GM10248 (cell line): ENCODE measurements at regions of chr1 and their contacts with region 1.

Region 1: GRCh38 chr1:204961765-204962419 is 81.1 kb upstream of the CNTN2 start:
- DNase-seq: no peak
- CTCF ChIP-seq: no peak

Region 2: GRCh38 chr1:204763706-204764427 is 198.0 kb before region 1 on chr1:
- CTCF ChIA-PET with region 1: no interaction called
- POLR2A ChIA-PET with region 1: no interaction called
- DNase-seq: peak; percentile 82
- CTCF ChIP-seq: peak; percentile 86

Region 3: GRCh38 chr1:204941421-204942338 is 20.2 kb before region 1 on chr1:
- CTCF ChIA-PET with region 1: interaction called, 12 read pairs
- POLR2A ChIA-PET with region 1: no interaction called
- DNase-seq: peak; percentile 59
- CTCF ChIP-seq: peak; percentile 88

Region 4: DNA sequence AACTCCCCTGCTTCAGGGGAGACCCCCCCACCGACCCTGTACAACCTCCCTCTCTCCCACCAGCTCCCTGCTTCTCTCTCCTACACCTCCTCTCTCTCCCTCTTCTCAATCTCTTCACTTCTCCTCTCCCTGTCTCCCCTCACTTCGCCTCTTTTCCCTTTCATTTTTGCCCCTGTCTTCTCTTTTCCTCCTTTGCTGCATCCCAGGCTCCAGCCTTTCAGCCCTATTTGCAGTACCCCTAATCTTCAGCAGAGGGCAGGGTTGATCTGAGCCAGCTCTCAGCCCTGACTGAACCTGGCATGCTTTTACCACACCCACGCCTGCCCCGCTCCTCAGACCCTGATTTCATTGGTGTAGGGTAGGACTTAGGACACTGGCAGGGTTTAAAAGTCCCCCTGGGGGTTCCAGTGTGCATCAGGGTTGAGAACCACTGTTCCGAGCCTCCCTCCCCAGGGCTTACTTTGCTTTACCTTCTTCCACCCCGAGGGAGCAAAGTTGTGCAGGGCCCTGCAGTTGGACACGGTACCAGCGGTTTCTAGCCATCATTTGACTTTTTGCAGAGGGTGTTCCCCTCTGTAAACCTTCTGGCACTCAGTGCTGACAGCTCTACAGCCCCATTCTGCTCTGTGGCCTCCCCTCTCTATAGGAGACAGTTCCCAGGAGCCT is 13.8 kb after region 1 on chr1:
- CTCF ChIA-PET with region 1: interaction called, 27 read pairs
- POLR2A ChIA-PET with region 1: no interaction called
- DNase-seq: peak; percentile 83
- CTCF ChIP-seq: peak; percentile 92